Caco-2 (cell line): ENCODE measurements at regions of chr5 and their contacts with region 1.

Region 1: GRCh38 chr5:38809388-38810359 is 36.1 kb upstream of the OSMR start:
- DNase-seq: peak; percentile 83
- H3K4me3 ChIP-seq: no peak overlapping the region
- H3K4me3 Mint-ChIP-seq: no peak overlapping the region
- H3K27ac Mint-ChIP-seq: no peak overlapping the region
- H3K4me1 ChIP-seq: peaks cover 12% of the 10 kb centered on the region
- H3K4me1 Mint-ChIP-seq: no peaks in the 10 kb centered on the region
- H3K27me3 ChIP-seq: no peaks in the 10 kb centered on the region
- H3K27me3 Mint-ChIP-seq: no peaks in the 10 kb centered on the region
- CTCF ChIP-seq: peak; percentile 88 to 93

Region 2: GRCh38 chr5:38208782-38209378 is 600.8 kb before region 1 on chr5:
- CTCF ChIA-PET with region 1: interaction called, 6 read pairs
- POLR2A ChIA-PET with region 1: no interaction called
- intact Hi-C with region 1: loop called (anchors 2 kb)
- DNase-seq: peak; percentile 44 to 50
- H3K4me3 ChIP-seq: no peak overlapping the region
- H3K4me3 Mint-ChIP-seq: no peak overlapping the region
- H3K27ac Mint-ChIP-seq: no peak overlapping the region
- H3K4me1 ChIP-seq: no peaks in the 10 kb centered on the region
- H3K4me1 Mint-ChIP-seq: peaks cover 7% of the 10 kb centered on the region
- H3K27me3 ChIP-seq: no peaks in the 10 kb centered on the region
- H3K27me3 Mint-ChIP-seq: peaks cover 10% of the 10 kb centered on the region
- CTCF ChIP-seq: peak; percentile 51 to 57

Region 3: GRCh38 chr5:38338455-38338854 is 471.2 kb before region 1 on chr5:
- CTCF ChIA-PET with region 1: no interaction called
- POLR2A ChIA-PET with region 1: no interaction called
- intact Hi-C with region 1: no loop called
- DNase-seq: no peak
- H3K4me3 ChIP-seq: no peak overlapping the region
- H3K4me3 Mint-ChIP-seq: no peak overlapping the region
- H3K27ac Mint-ChIP-seq: no peak overlapping the region
- H3K4me1 ChIP-seq: no peaks in the 10 kb centered on the region
- H3K4me1 Mint-ChIP-seq: peaks cover 6% of the 10 kb centered on the region
- H3K27me3 ChIP-seq: no peaks in the 10 kb centered on the region
- H3K27me3 Mint-ChIP-seq: peaks cover 15% of the 10 kb centered on the region
- CTCF ChIP-seq: no peak

Region 4: GRCh38 chr5:38382898-38383297 is 426.8 kb before region 1 on chr5:
- CTCF ChIA-PET with region 1: interaction called, 8 read pairs
- POLR2A ChIA-PET with region 1: no interaction called
- intact Hi-C with region 1: loop called (anchors 1 kb)
- DNase-seq: peak; percentile 81 to 83
- H3K4me3 ChIP-seq: no peak overlapping the region
- H3K4me3 Mint-ChIP-seq: no peak overlapping the region
- H3K27ac Mint-ChIP-seq: no peak overlapping the region
- H3K4me1 ChIP-seq: no peaks in the 10 kb centered on the region
- H3K4me1 Mint-ChIP-seq: peaks cover 8% of the 10 kb centered on the region
- H3K27me3 ChIP-seq: no peaks in the 10 kb centered on the region
- H3K27me3 Mint-ChIP-seq: peaks cover 5% of the 10 kb centered on the region
- CTCF ChIP-seq: peak; percentile 70 to 84

Region 5: GRCh38 chr5:38497946-38498345 is 311.7 kb before region 1 on chr5:
- CTCF ChIA-PET with region 1: interaction called, 3 read pairs
- POLR2A ChIA-PET with region 1: no interaction called
- intact Hi-C with region 1: loop called (anchors 1 kb)
- DNase-seq: peak in 1 of 2 experiments; percentile 35
- H3K4me3 ChIP-seq: no peak overlapping the region
- H3K4me3 Mint-ChIP-seq: no peak overlapping the region
- H3K27ac Mint-ChIP-seq: no peak overlapping the region
- H3K4me1 ChIP-seq: peaks cover 7% of the 10 kb centered on the region; the same call in 1 of the 2 replicates
- H3K4me1 Mint-ChIP-seq: peaks cover 6% of the 10 kb centered on the region
- H3K27me3 ChIP-seq: no peaks in the 10 kb centered on the region
- H3K27me3 Mint-ChIP-seq: no peaks in the 10 kb centered on the region
- CTCF ChIP-seq: peak; percentile 11 to 52

Region 6: GRCh38 chr5:38672059-38672788 is 137.4 kb before region 1 on chr5:
- CTCF ChIA-PET with region 1: interaction called, 7 read pairs
- POLR2A ChIA-PET with region 1: no interaction called
- intact Hi-C with region 1: loop called (anchors 2 kb)
- DNase-seq: peak; percentile 73 to 74
- H3K4me3 ChIP-seq: no peak overlapping the region
- H3K4me3 Mint-ChIP-seq: no peak overlapping the region
- H3K27ac Mint-ChIP-seq: peak overlapping the region; percentile 76
- H3K4me1 ChIP-seq: peaks cover 60% of the 10 kb centered on the region
- H3K4me1 Mint-ChIP-seq: peaks cover 36% of the 10 kb centered on the region
- H3K27me3 ChIP-seq: no peaks in the 10 kb centered on the region
- H3K27me3 Mint-ChIP-seq: no peaks in the 10 kb centered on the region
- CTCF ChIP-seq: no peak

Region 7: GRCh38 chr5:38751103-38751502 is 58.6 kb before region 1 on chr5:
- CTCF ChIA-PET with region 1: no interaction called
- POLR2A ChIA-PET with region 1: no interaction called
- intact Hi-C with region 1: no loop called
- DNase-seq: no peak
- H3K4me3 ChIP-seq: no peak overlapping the region
- H3K4me3 Mint-ChIP-seq: no peak overlapping the region
- H3K27ac Mint-ChIP-seq: no peak overlapping the region
- H3K4me1 ChIP-seq: no peaks in the 10 kb centered on the region
- H3K4me1 Mint-ChIP-seq: peaks cover 9% of the 10 kb centered on the region
- H3K27me3 ChIP-seq: no peaks in the 10 kb centered on the region
- H3K27me3 Mint-ChIP-seq: no peaks in the 10 kb centered on the region
- CTCF ChIP-seq: no peak

Region 8: GRCh38 chr5:38994324-38994927 is 184.8 kb after region 1 on chr5:
- CTCF ChIA-PET with region 1: no interaction called
- POLR2A ChIA-PET with region 1: no interaction called
- intact Hi-C with region 1: no loop called
- DNase-seq: peak; percentile 50
- H3K4me3 ChIP-seq: no peak overlapping the region
- H3K4me3 Mint-ChIP-seq: no peak overlapping the region
- H3K27ac Mint-ChIP-seq: no peak overlapping the region
- H3K4me1 ChIP-seq: no peaks in the 10 kb centered on the region
- H3K4me1 Mint-ChIP-seq: no peaks in the 10 kb centered on the region
- H3K27me3 ChIP-seq: no peaks in the 10 kb centered on the region
- H3K27me3 Mint-ChIP-seq: no peaks in the 10 kb centered on the region
- CTCF ChIP-seq: peak; percentile 23 to 68